K562 (cell line): ENCODE measurements at regions of chr4 and their contacts with region 1.

Region 1: DNA sequence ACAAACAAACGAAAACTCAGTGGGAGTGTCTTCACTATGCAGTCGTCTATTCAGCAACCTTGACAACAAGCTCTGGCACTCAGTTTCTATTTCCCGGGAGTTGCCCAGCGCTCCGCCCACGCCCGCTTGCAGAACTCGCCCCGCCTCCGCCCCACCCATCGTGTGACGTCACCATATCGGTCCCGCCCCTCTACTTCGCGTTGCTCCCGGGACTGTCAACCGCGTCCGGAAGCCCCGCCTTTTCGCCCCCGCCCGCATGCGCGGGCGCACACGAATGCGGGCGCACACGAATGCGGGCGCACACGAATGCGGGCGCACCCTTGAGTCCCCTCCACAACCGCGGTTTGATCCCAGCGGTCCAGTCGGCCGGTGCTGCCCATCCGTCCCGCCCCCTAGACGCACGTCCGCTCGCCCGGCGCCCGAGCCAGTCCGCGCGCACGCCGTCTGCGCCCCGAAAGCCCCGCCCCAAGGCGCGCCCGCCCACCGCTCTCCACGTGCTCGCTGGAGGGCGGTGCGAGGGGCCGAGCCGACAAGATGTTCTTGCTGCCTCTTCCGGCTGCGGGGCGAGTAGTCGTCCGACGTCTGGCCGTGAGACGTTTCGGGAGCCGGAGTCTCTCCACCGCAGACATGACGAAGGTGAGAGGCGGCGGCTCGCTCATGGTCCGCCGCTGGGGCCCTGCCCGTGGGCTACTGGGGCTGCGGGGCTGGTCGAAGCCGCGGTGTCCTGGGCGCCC is at the start of gene LAP3:
- DNase-seq: peak; percentile 95 to 96 (median 96)
- ATAC-seq: peak; percentile 96
- H3K4me3 ChIP-seq: peak within 1 kb of the TSS; percentile 94
- H3K27ac ChIP-seq: peak within 1 kb of the TSS; percentile 85
- H3K4me1 ChIP-seq: peaks cover 6 to 10% of the 10 kb centered on the region in 2 experiments; a peak in 4 of 5 replicates
- H3K27me3 ChIP-seq: no peaks in the 10 kb centered on the region
- CTCF ChIP-seq: no peak
- EP300 ChIP-seq: no peak
- POLR2A ChIP-seq: peak; percentile 87
- RAD21 ChIP-seq: no peak
- polyA plus RNA-seq, gene LAP3: 97.3 to 170 TPM

Region 2: GRCh38 chr4:17490575-17491059 is 86.5 kb before region 1 on chr4:
- CTCF ChIA-PET with region 1: no interaction called
- POLR2A ChIA-PET with region 1: no interaction called
- in situ Hi-C with region 1: no loop called
- intact Hi-C with region 1: no loop called
- DNase-seq: no peak
- ATAC-seq: no peak
- H3K4me3 ChIP-seq: no peak overlapping the region
- H3K27ac ChIP-seq: no peak overlapping the region
- H3K4me1 ChIP-seq: peaks cover 8 to 16% of the 10 kb centered on the region in 2 experiments
- H3K27me3 ChIP-seq: no peaks in the 10 kb centered on the region; a peak in 1 of 5 replicates
- CTCF ChIP-seq: no peak
- EP300 ChIP-seq: no peak
- POLR2A ChIP-seq: no peak
- RAD21 ChIP-seq: no peak

Region 3: GRCh38 chr4:17511950-17512795 is 64.9 kb before region 1 on chr4 and contains the start of gene QDPR:
- CTCF ChIA-PET with region 1: no interaction called
- POLR2A ChIA-PET with region 1: no interaction called
- in situ Hi-C with region 1: no loop called
- intact Hi-C with region 1: loop called (anchors 2 kb)
- DNase-seq: peak; percentile 89 to 91 (median 90)
- ATAC-seq: peak; percentile 97
- H3K4me3 ChIP-seq: peak within 1 kb of the TSS; percentile 89
- H3K27ac ChIP-seq: peak within 1 kb of the TSS; percentile 71
- H3K4me1 ChIP-seq: peaks cover 8 to 17% of the 10 kb centered on the region in 2 experiments; a peak in 4 of 5 replicates
- H3K27me3 ChIP-seq: peaks cover 11 to 14% of the 10 kb centered on the region in 2 experiments; a peak in 4 of 5 replicates
- CTCF ChIP-seq: peak; percentile 43 to 72 (median 53); a peak in 5 of 6 replicates
- EP300 ChIP-seq: no peak
- POLR2A ChIP-seq: peak; percentile 67
- RAD21 ChIP-seq: peak in 1 of 2 experiments; percentile 25; a peak in 3 of 4 replicates
- polyA plus RNA-seq, gene QDPR: 5.7 to 6.4 TPM

Region 4: GRCh38 chr4:17614416-17615299 is 37.6 kb after region 1 on chr4 and contains the start of gene MED28:
- CTCF ChIA-PET with region 1: no interaction called
- POLR2A ChIA-PET with region 1: interaction called, 6 read pairs
- in situ Hi-C with region 1: no loop called
- intact Hi-C with region 1: loop called (anchors 1 kb)
- DNase-seq: peak; percentile 97 to 98 (median 98)
- ATAC-seq: peak; percentile 94
- H3K4me3 ChIP-seq: peak within 1 kb of the TSS; percentile 78
- H3K27ac ChIP-seq: peak within 1 kb of the TSS; percentile 90
- H3K4me1 ChIP-seq: peaks cover 15 to 16% of the 10 kb centered on the region in 2 experiments
- H3K27me3 ChIP-seq: no peaks in the 10 kb centered on the region
- CTCF ChIP-seq: 0 out of 6 replicates have a peak, but pooled peaks of 1 of the 3 experiments have one; percentile 17
- EP300 ChIP-seq: no peak
- POLR2A ChIP-seq: peak; percentile 96
- RAD21 ChIP-seq: no peak
- polyA plus RNA-seq, gene MED28: 76.5 to 79.2 TPM